ENCODE measurements at regions of chr17 and their contacts with region 1.

Region 1: DNA sequence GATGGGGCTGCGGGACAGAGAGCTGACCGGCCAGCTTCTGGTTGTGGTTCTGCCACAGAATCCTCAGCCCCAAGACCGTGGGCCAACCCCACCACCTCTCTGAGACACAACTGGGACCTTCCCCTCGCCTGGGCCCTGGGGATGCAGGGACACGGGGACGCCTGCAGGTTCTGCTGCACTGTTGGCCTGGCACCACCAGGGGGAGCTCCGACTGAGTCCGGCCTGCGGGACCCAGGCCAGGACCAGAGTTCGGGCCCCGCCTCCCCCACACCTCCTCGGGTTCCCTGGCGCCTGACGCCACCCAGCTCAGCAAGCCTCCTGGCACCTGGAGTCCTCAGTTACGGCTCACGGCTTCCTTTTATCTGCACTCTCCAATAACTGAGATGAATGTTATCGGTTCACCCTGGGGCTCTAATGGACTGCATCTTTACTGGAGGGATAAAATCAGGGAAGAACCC is 27.3 kb downstream of the TBC1D16 start:
- DNase-seq: peak; percentile 61
- ATAC-seq: peak; percentile 94
- H3K4me3 ChIP-seq: no peak overlapping the region
- H3K27ac ChIP-seq: peak overlapping the region; percentile 23; the same call in 1 of the 2 replicates
- H3K4me1 ChIP-seq: peaks cover 17 to 22% of the 10 kb centered on the region in 2 experiments
- H3K27me3 ChIP-seq: no peaks in the 10 kb centered on the region
- CTCF ChIP-seq: peak; percentile 89 to 100 (median 100)
- POLR2A ChIP-seq: no peak
- RAD21 ChIP-seq: peak; percentile 81

Region 2: GRCh38 chr17:79721993-79722671 is 286.3 kb before region 1 on chr17:
- CTCF ChIA-PET with region 1: no interaction called
- POLR2A ChIA-PET with region 1: no interaction called
- RAD21 ChIA-PET with region 1: no interaction called
- intact Hi-C with region 1: no loop called
- DNase-seq: no peak
- ATAC-seq: peak; percentile 93
- H3K4me3 ChIP-seq: no peak overlapping the region
- H3K27ac ChIP-seq: no peak overlapping the region
- H3K4me1 ChIP-seq: no peaks in the 10 kb centered on the region
- H3K27me3 ChIP-seq: no peaks in the 10 kb centered on the region
- CTCF ChIP-seq: peak; percentile 39 to 59 (median 55); a peak in 5 of 6 replicates
- POLR2A ChIP-seq: no peak
- RAD21 ChIP-seq: peak; percentile 69

Region 3: DNA sequence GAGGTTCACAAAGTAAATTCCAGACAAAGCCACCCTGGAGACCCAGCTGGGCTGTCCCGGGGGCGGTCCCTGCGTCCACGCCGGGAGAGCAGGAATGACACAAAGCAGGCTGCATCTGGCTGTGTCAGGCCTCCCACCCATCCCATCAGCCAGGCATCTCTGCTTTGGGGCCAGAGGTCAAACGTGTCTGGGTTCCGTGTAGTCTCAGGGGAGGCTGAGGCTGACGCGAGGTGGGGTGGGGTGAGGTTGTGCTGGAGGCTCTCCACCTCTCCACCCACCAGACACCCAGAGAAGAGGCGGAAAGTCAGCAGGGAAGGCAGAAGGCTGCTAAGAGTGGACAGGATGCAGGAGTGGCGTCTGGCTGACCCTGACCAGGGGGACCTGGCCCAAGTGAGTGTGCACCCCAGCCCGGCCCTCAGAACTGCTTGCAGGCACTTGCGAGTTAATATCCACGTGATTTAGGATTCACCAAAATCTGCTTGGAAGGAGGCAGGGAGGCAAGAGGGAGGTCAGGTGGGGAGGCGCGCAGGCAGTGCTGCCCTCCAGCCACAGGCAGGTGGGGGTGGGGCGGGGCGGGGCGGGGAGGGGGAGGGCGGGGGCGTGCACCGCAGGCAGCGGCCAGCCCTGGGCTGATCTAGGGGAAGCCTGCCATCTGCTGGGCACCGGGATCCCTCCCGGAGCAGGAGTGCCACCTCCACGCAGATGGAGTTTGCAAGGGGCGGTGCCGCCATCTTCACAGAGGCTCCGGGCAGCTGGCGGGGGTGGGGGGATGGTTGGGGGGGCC is 17.1 kb before region 1 on chr17:
- CTCF ChIA-PET with region 1: interaction called, 37 read pairs
- POLR2A ChIA-PET with region 1: no interaction called
- RAD21 ChIA-PET with region 1: no interaction called
- intact Hi-C with region 1: no loop called
- DNase-seq: peak; percentile 68
- ATAC-seq: peak; percentile 89
- H3K4me3 ChIP-seq: no peak overlapping the region
- H3K27ac ChIP-seq: peak overlapping the region; percentile 37; the same call in 1 of the 2 replicates
- H3K4me1 ChIP-seq: peaks cover 51 to 57% of the 10 kb centered on the region in 2 experiments
- H3K27me3 ChIP-seq: no peaks in the 10 kb centered on the region
- CTCF ChIP-seq: peak in 2 of 3 experiments; percentile 44 to 71; a peak in 5 of 6 replicates
- POLR2A ChIP-seq: no peak
- RAD21 ChIP-seq: peak; percentile 82

Region 4: GRCh38 chr17:80018917-80019651 is 10.7 kb after region 1 on chr17:
- CTCF ChIA-PET with region 1: interaction called, 20 read pairs
- POLR2A ChIA-PET with region 1: no interaction called
- RAD21 ChIA-PET with region 1: no interaction called
- intact Hi-C with region 1: no loop called
- DNase-seq: no peak
- ATAC-seq: no peak
- H3K4me3 ChIP-seq: no peak overlapping the region
- H3K27ac ChIP-seq: no peak overlapping the region
- H3K4me1 ChIP-seq: peaks cover 2 to 8% of the 10 kb centered on the region in 2 experiments; a peak in 2 of 4 replicates
- H3K27me3 ChIP-seq: no peaks in the 10 kb centered on the region
- CTCF ChIP-seq: no peak
- POLR2A ChIP-seq: no peak
- RAD21 ChIP-seq: no peak

Region 5: GRCh38 chr17:80101011-80101945 is 92.9 kb after region 1 on chr17 and contains the start of gene GAA:
- CTCF ChIA-PET with region 1: interaction called, 13 read pairs
- POLR2A ChIA-PET with region 1: interaction called, 3 read pairs
- RAD21 ChIA-PET with region 1: interaction called in 1 of 2 experiments, 3 read pairs
- intact Hi-C with region 1: no loop called
- DNase-seq: peak; percentile 68
- ATAC-seq: peak; percentile 90
- H3K4me3 ChIP-seq: peak within 1 kb of the TSS; percentile 71 to 99
- H3K27ac ChIP-seq: peak within 1 kb of the TSS; percentile 83
- H3K4me1 ChIP-seq: peaks cover 27 to 33% of the 10 kb centered on the region in 2 experiments
- H3K27me3 ChIP-seq: no peaks in the 10 kb centered on the region
- CTCF ChIP-seq: peak in 2 of 3 experiments; percentile 69 to 83; a peak in 5 of 6 replicates
- POLR2A ChIP-seq: peak; percentile 79
- RAD21 ChIP-seq: no peak
- total RNA-seq, gene GAA: 131 TPM

Region 6: GRCh38 chr17:80252607-80253289 is 244.3 kb after region 1 on chr17:
- CTCF ChIA-PET with region 1: no interaction called
- POLR2A ChIA-PET with region 1: no interaction called
- RAD21 ChIA-PET with region 1: interaction called in 1 of 2 experiments, 4 read pairs
- intact Hi-C with region 1: loop called (anchors 2 kb)
- DNase-seq: peak; percentile 46
- ATAC-seq: peak; percentile 90
- H3K4me3 ChIP-seq: no peak overlapping the region
- H3K27ac ChIP-seq: peak overlapping the region; percentile 3; the same call in 1 of the 2 replicates
- H3K4me1 ChIP-seq: peaks cover 31 to 49% of the 10 kb centered on the region in 2 experiments
- H3K27me3 ChIP-seq: no peaks in the 10 kb centered on the region
- CTCF ChIP-seq: peak; percentile 81 to 94 (median 91)
- POLR2A ChIP-seq: no peak
- RAD21 ChIP-seq: peak; percentile 92

Region 7: GRCh38 chr17:80297996-80298560 is 289.7 kb after region 1 on chr17:
- CTCF ChIA-PET with region 1: no interaction called
- POLR2A ChIA-PET with region 1: no interaction called
- RAD21 ChIA-PET with region 1: no interaction called
- intact Hi-C with region 1: no loop called
- DNase-seq: no peak
- ATAC-seq: no peak
- H3K4me3 ChIP-seq: no peak overlapping the region
- H3K27ac ChIP-seq: no peak overlapping the region
- H3K4me1 ChIP-seq: no peaks in the 10 kb centered on the region
- H3K27me3 ChIP-seq: no peaks in the 10 kb centered on the region
- CTCF ChIP-seq: no peak
- POLR2A ChIP-seq: no peak
- RAD21 ChIP-seq: no peak

Region 8: GRCh38 chr17:80981062-80981902 is 972.9 kb after region 1 on chr17:
- CTCF ChIA-PET with region 1: interaction called, 3 read pairs
- POLR2A ChIA-PET with region 1: no interaction called
- RAD21 ChIA-PET with region 1: no interaction called
- intact Hi-C with region 1: loop called (anchors 5 kb)
- DNase-seq: no peak
- ATAC-seq: peak; percentile 57
- H3K4me3 ChIP-seq: no peak overlapping the region
- H3K27ac ChIP-seq: no peak overlapping the region; the same call in 1 of the 2 replicates
- H3K4me1 ChIP-seq: peaks cover 21 to 32% of the 10 kb centered on the region in 2 experiments
- H3K27me3 ChIP-seq: no peaks in the 10 kb centered on the region
- CTCF ChIP-seq: peak; percentile 59 to 95 (median 61)
- POLR2A ChIP-seq: no peak
- RAD21 ChIP-seq: peak; percentile 83

Measured in HCT116 (cell line).